SK-N-SH (cell line): ENCODE measurements at regions of chr12 and their contacts with region 1.

Region 1: GRCh38 chr12:94149119-94149780 is 873 bp downstream of the PLXNC1 start:
- DNase-seq: no peak
- H3K4me3 ChIP-seq: peak overlapping the region; percentile 39 to 53; a peak in 3 of 4 replicates
- H3K27ac ChIP-seq: no peak overlapping the region
- H3K4me1 ChIP-seq: peaks cover 0 to 18% of the 10 kb centered on the region in 2 experiments; a peak in 2 of 4 replicates
- H3K27me3 ChIP-seq: peaks cover 59% of the 10 kb centered on the region
- CTCF ChIP-seq: peak; percentile 26
- EP300 ChIP-seq: no peak
- RAD21 ChIP-seq: no peak

Region 2: GRCh38 chr12:94172973-94173372 is 23.7 kb after region 1 on chr12:
- CTCF ChIA-PET with region 1: interaction called, 13 read pairs
- POLR2A ChIA-PET with region 1: no interaction called
- DNase-seq: no peak
- H3K4me3 ChIP-seq: no peak overlapping the region
- H3K27ac ChIP-seq: no peak overlapping the region
- H3K4me1 ChIP-seq: no peaks in the 10 kb centered on the region
- H3K27me3 ChIP-seq: no peaks in the 10 kb centered on the region
- CTCF ChIP-seq: no peak
- EP300 ChIP-seq: no peak
- RAD21 ChIP-seq: no peak

Region 3: DNA sequence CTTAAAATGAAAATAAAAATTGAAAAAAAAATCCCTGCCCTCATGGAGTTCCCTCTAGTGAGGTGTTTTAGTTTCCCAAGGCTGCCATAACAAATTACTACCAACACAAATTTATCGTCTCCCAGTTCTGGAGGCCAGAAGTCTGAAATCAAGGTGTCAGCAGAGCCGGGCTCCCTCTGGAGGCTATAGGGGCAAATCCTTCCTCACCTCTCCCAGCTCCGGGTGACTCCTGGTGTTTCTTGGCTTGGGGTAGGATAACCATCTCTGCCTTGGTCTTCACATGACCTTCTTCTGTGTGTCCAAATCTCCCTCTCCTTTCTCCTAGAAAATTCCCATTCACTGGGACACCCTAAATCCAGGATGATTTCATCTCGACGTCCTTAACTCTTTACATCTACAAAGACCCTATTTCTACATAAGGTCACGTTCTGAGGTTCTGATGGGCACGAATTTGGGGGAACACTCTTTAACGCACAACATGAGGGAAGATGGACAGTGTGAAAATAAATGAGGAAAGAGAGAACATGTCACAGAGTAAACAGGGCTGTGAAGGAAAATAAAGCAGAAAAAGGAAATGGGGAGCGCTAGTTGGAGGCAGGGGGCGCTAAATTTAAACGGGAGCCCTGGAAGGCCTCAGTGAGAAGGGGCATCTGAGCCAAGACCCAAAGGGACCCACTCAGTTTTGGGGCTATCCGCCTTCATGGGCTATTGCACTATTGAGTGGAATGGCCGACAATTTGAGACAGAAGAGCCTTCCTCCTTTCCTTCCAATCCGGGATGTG is 49.4 kb after region 1 on chr12:
- CTCF ChIA-PET with region 1: no interaction called
- POLR2A ChIA-PET with region 1: no interaction called
- DNase-seq: no peak
- H3K4me3 ChIP-seq: no peak overlapping the region
- H3K27ac ChIP-seq: no peak overlapping the region
- H3K4me1 ChIP-seq: no peaks in the 10 kb centered on the region
- H3K27me3 ChIP-seq: no peaks in the 10 kb centered on the region
- CTCF ChIP-seq: no peak
- EP300 ChIP-seq: no peak
- RAD21 ChIP-seq: no peak

Region 4: DNA sequence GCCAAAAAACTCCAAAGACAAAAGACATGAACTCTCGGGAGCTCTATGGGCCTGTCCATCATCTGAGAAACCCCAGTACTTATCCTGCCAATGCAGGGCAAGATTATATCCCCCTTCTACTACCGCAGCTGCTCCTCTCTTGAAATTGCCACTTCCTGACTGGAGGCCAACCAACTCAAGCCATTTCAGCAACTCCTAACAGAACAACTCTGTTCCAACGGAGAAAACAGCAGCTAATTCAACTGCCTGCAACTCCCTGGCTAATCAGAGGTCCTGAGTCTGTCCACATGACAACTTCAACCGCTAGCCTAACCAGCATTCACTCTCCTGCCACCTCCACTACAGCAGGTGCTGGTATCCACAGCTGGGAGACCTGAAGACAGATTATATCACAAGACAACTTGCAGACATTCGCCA is 286.3 kb after region 1 on chr12:
- CTCF ChIA-PET with region 1: interaction called, 45 read pairs
- POLR2A ChIA-PET with region 1: no interaction called
- DNase-seq: no peak
- H3K4me3 ChIP-seq: no peak overlapping the region
- H3K27ac ChIP-seq: no peak overlapping the region
- H3K4me1 ChIP-seq: peaks cover 0 to 3% of the 10 kb centered on the region in 2 experiments; a peak in 1 of 4 replicates
- H3K27me3 ChIP-seq: no peaks in the 10 kb centered on the region
- CTCF ChIP-seq: no peak
- EP300 ChIP-seq: no peak
- RAD21 ChIP-seq: no peak

Region 5: GRCh38 chr12:94532490-94533422 is 383.5 kb after region 1 on chr12:
- CTCF ChIA-PET with region 1: interaction called, 24 read pairs
- POLR2A ChIA-PET with region 1: no interaction called
- DNase-seq: peak; percentile 79
- H3K4me3 ChIP-seq: no peak overlapping the region
- H3K27ac ChIP-seq: no peak overlapping the region
- H3K4me1 ChIP-seq: peaks cover 0 to 2% of the 10 kb centered on the region in 2 experiments; a peak in 1 of 4 replicates
- H3K27me3 ChIP-seq: no peaks in the 10 kb centered on the region; the same call in 1 of the 2 replicates
- CTCF ChIP-seq: peak; percentile 83
- EP300 ChIP-seq: no peak
- RAD21 ChIP-seq: peak; percentile 95